Activated naive CD4-positive, alpha-beta T cell treated with anti-CD3 and anti-CD28 coated beads for 36 hours (primary cell): ENCODE measurements at regions of chr17 and their contacts with region 1.

Region 1: GRCh38 chr17:32783602-32784001 is 93.3 kb downstream of the MYO1D start:
- DNase-seq: no peak
- H3K4me3 Mint-ChIP-seq: no peak overlapping the region
- H3K27ac Mint-ChIP-seq: no peak overlapping the region
- H3K4me1 Mint-ChIP-seq: no peaks in the 10 kb centered on the region
- H3K27me3 Mint-ChIP-seq: no peaks in the 10 kb centered on the region

Region 2: GRCh38 chr17:32253117-32253611 is 530.4 kb before region 1 on chr17:
- CTCF ChIA-PET with region 1: no interaction called
- intact Hi-C with region 1: no loop called
- DNase-seq: peak; percentile 89
- H3K4me3 Mint-ChIP-seq: no peak overlapping the region
- H3K27ac Mint-ChIP-seq: no peak overlapping the region
- H3K4me1 Mint-ChIP-seq: no peaks in the 10 kb centered on the region
- H3K27me3 Mint-ChIP-seq: peaks cover 3% of the 10 kb centered on the region

Region 3: GRCh38 chr17:32769839-32770238 is 13.8 kb before region 1 on chr17:
- CTCF ChIA-PET with region 1: interaction called, 17 read pairs
- intact Hi-C with region 1: no loop called
- DNase-seq: no peak
- H3K4me3 Mint-ChIP-seq: no peak overlapping the region
- H3K27ac Mint-ChIP-seq: no peak overlapping the region
- H3K4me1 Mint-ChIP-seq: no peaks in the 10 kb centered on the region
- H3K27me3 Mint-ChIP-seq: no peaks in the 10 kb centered on the region

Region 4: GRCh38 chr17:32794533-32795246 is 11.1 kb after region 1 on chr17:
- CTCF ChIA-PET with region 1: interaction called, 12 read pairs
- intact Hi-C with region 1: no loop called
- DNase-seq: no peak
- H3K4me3 Mint-ChIP-seq: no peak overlapping the region
- H3K27ac Mint-ChIP-seq: no peak overlapping the region
- H3K4me1 Mint-ChIP-seq: no peaks in the 10 kb centered on the region
- H3K27me3 Mint-ChIP-seq: peaks cover 3% of the 10 kb centered on the region

Region 5: DNA sequence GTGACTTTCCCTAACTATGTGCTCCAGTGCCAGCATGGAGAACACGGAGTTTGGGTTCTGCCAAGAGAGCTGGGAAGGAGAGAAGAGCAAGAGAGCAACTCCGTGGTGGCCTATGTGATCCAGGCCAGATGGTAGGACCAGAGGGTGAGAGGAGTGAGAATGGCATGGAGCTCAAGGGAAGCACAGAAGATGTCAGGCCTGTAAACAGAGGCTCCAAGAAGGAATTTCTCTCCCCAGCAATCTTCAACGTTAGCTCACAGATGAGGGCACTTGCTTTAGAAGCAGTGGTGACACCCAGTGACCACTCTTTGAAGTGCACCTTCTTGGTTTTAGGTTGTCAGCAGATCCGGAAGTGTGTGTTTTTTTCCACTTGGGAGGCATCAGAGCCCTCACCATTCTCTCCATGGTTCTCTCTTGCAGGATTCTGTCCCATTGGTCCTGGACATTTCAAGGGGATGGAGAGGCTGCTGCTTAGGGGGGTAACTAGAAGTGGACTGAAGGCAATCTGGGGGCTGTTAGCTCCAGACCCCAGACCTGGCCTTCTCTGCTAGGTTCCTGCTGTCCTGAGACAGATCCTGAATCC is 126.3 kb after region 1 on chr17:
- CTCF ChIA-PET with region 1: interaction called, 15 read pairs
- intact Hi-C with region 1: loop called (anchors 1 kb)
- DNase-seq: peak; percentile 76
- H3K4me3 Mint-ChIP-seq: no peak overlapping the region
- H3K27ac Mint-ChIP-seq: no peak overlapping the region
- H3K4me1 Mint-ChIP-seq: no peaks in the 10 kb centered on the region
- H3K27me3 Mint-ChIP-seq: peaks cover 7% of the 10 kb centered on the region

Region 6: DNA sequence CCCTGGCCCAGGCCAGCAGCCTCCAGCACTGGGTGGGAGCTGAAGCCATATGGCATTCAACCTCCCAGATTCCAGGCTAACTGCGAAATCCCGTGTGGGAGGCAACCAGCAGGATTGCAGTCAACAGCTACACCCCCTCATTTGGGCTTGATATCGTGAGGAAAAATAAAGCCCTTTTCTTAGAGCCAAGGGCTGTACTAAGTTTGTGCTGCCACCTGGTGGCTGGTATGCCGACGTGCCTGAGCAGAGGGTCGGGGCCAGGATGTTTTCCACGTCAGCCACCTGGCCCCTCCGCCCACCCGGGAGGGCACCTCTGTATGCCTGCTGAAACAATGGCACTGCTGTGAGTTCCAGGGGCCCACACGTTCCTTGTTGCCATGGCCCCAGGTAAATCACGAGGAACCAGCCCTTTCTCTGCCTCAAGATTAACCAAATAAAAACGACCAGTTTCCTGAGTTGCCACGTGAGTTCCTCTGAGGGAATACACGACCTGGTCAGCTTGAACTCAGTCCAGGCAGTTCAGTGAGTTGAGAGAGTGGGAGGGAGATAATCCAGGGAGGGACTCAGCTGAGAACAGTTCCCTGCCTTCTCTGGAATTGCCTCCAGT is 153.4 kb after region 1 on chr17:
- CTCF ChIA-PET with region 1: interaction called, 43 read pairs
- intact Hi-C with region 1: loop called (anchors 1 kb)
- DNase-seq: peak; percentile 76
- H3K4me3 Mint-ChIP-seq: no peak overlapping the region
- H3K27ac Mint-ChIP-seq: no peak overlapping the region
- H3K4me1 Mint-ChIP-seq: no peaks in the 10 kb centered on the region
- H3K27me3 Mint-ChIP-seq: peaks cover 16% of the 10 kb centered on the region

Region 7: GRCh38 chr17:32997753-32998632 is 214.4 kb after region 1 on chr17:
- CTCF ChIA-PET with region 1: interaction called, 11 read pairs
- intact Hi-C with region 1: loop called (anchors 1 kb)
- DNase-seq: peak; percentile 83
- H3K4me3 Mint-ChIP-seq: no peak overlapping the region
- H3K27ac Mint-ChIP-seq: no peak overlapping the region
- H3K4me1 Mint-ChIP-seq: peaks cover 4% of the 10 kb centered on the region
- H3K27me3 Mint-ChIP-seq: peaks cover 18% of the 10 kb centered on the region